PC-3 (cell line): ENCODE measurements at regions of chr7 and their contacts with region 1.

Region 1: GRCh38 chr7:43700059-43700501 is 29.2 kb downstream of the COA1 start:
- DNase-seq: peak; percentile 80
- ATAC-seq: peak; percentile 56
- H3K4me3 ChIP-seq: no peak overlapping the region
- H3K27ac ChIP-seq: no peak overlapping the region
- H3K4me1 ChIP-seq: peaks cover 29% of the 10 kb centered on the region
- H3K27me3 ChIP-seq: no peaks in the 10 kb centered on the region
- CTCF ChIP-seq: peak; percentile 85

Region 2: GRCh38 chr7:43454936-43455518 is 245.1 kb before region 1 on chr7:
- CTCF ChIA-PET with region 1: interaction called, 4 read pairs
- POLR2A ChIA-PET with region 1: no interaction called
- intact Hi-C with region 1: loop called (anchors 5 kb)
- DNase-seq: peak; percentile 66
- ATAC-seq: peak; percentile 67
- H3K4me3 ChIP-seq: peak overlapping the region; percentile 26; the same call in 1 of the 2 replicates
- H3K27ac ChIP-seq: no peak overlapping the region
- H3K4me1 ChIP-seq: no peaks in the 10 kb centered on the region
- H3K27me3 ChIP-seq: no peaks in the 10 kb centered on the region
- CTCF ChIP-seq: peak; percentile 81

Region 3: DNA sequence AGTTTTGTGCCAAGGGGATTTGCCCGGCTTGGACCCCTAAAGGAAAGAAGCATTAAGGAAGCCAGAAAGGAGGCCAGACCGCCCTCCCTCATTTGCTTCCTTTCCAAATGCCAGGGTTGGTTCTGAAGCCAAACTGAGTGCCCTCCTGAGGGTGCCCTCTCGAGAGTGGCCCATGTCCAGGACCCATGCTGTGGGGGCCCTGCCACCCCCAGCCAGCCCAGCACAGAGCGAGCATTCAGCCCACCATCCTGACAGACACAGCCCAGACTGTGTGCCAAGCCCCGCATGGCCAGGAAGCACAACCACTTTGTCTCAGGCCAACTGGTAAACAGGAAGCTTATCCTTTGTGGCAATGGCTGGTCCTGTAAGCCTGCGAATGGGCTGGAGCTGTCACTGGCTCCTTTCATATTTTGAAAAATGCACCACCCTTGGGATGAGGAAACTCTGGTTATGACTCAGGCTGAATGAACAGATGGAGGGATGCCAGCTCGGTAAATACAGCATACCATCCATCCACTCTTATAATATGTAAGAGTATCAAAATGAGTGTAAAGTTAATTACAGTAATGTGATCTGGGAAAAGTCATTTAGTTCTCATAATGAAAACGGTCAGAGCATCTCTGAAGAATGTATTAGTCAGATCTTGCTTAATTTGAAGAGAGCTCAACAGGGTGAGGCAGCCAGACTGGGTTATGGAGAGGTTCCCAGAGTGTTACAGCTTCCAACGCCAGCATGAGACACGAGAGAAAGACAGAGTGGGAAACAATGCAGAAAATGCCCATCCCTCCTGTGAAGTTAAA is 52.2 kb before region 1 on chr7:
- CTCF ChIA-PET with region 1: interaction called, 17 read pairs
- POLR2A ChIA-PET with region 1: interaction called, 4 read pairs
- intact Hi-C with region 1: loop called (anchors 2 kb)
- DNase-seq: peak; percentile 98
- ATAC-seq: peak; percentile 64
- H3K4me3 ChIP-seq: peak overlapping the region; percentile 33; the same call in 1 of the 2 replicates
- H3K27ac ChIP-seq: peak overlapping the region; percentile 99
- H3K4me1 ChIP-seq: peaks cover 73% of the 10 kb centered on the region
- H3K27me3 ChIP-seq: no peaks in the 10 kb centered on the region
- CTCF ChIP-seq: no peak

Region 4: DNA sequence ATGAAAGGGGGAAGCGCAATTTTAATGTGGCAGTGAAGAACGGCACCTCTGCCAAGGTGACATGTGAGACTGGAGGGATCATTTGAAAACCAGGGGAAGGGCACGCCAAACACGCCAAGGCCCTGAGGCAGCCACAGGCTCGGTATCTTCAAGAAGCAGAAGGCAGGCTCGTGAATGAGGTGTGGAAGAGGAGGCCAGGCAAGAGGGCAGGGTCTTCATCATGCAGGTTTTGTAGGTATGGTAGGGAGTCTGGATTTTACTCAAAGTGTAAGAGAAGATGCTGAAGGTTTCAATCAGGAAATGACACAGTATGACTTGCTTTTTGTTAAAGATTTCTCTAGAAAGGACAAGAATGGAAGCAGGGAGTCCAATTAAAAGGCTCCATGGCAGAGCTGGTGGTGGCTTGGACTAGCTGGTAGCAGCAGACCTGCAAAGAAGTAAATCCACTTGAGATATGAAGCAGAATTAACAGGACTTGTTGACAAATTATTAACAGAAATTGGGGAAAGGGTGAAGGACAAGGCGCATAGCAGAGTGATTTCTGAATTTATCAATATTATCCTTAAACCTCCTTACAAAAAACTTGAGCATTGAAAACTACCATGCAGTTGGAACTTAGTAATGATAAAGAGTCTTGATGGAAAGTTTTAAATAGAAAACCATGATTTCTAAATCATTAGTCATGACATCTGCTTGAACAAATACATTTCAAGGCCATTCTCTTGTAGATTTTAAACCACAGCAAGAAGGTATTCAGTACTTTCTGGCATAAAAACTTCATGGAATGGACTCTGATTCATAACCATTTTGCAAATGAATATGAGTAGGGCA is 41.1 kb before region 1 on chr7:
- CTCF ChIA-PET with region 1: no interaction called
- POLR2A ChIA-PET with region 1: no interaction called
- intact Hi-C with region 1: loop called (anchors 2 kb)
- DNase-seq: peak; percentile 86
- ATAC-seq: peak; percentile 82
- H3K4me3 ChIP-seq: peak overlapping the region; percentile 34
- H3K27ac ChIP-seq: peak overlapping the region; percentile 96
- H3K4me1 ChIP-seq: peaks cover 37% of the 10 kb centered on the region
- H3K27me3 ChIP-seq: no peaks in the 10 kb centered on the region
- CTCF ChIP-seq: no peak

Region 5: GRCh38 chr7:43721193-43721806 is 21.2 kb after region 1 on chr7:
- CTCF ChIA-PET with region 1: interaction called, 5 read pairs
- POLR2A ChIA-PET with region 1: no interaction called
- intact Hi-C with region 1: loop called (anchors 2 kb)
- DNase-seq: peak; percentile 69
- ATAC-seq: 0 out of 2 replicates have a peak, but pooled peaks have one; percentile 29
- H3K4me3 ChIP-seq: no peak overlapping the region
- H3K27ac ChIP-seq: no peak overlapping the region
- H3K4me1 ChIP-seq: peaks cover 7% of the 10 kb centered on the region
- H3K27me3 ChIP-seq: no peaks in the 10 kb centered on the region
- CTCF ChIP-seq: peak; percentile 80

Region 6: DNA sequence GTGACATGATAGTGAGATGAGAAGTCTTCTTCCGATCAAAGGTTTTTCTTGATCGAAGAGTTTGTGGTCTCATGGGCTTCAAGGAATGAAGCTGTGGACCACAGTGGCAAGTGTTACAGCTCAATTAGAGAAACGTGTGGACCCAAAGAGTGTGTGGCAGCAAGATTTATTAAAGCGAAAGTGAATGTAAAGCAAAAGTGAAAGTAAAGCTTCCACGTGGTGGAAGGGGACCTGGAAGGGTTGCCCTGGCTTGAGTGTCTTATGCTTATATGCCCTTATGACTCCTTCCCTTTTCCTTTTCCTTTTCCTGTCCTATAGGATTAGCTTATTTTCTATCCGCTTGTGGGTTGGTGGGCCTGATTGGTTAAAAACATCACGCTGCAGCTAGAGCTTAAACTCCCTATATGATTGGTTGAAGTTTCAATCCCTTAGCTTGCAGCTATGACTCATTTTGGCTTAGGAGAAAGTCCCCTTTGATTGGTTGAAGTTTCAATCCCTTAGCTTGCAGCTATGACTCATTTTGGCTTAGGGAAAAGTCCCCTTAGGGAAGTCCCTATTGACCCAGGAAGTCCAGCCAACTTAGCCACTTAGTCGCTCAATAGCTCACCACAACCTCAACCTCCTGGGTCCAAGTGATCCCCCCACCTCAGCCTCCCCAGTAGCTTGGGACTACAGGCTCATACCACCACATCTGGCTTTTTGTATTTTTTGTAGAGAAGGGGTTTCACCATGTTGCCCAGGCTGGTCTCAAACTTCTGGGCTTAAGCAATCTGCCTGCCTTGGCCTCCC is 134.6 kb after region 1 on chr7:
- CTCF ChIA-PET with region 1: interaction called, 3 read pairs
- POLR2A ChIA-PET with region 1: no interaction called
- intact Hi-C with region 1: loop called (anchors 2 kb)
- DNase-seq: peak; percentile 46
- ATAC-seq: no peak
- H3K4me3 ChIP-seq: no peak overlapping the region
- H3K27ac ChIP-seq: no peak overlapping the region
- H3K4me1 ChIP-seq: 0 out of 2 replicates have a peak, but pooled peaks cover 3% of the 10 kb centered on the region
- H3K27me3 ChIP-seq: no peaks in the 10 kb centered on the region
- CTCF ChIP-seq: no peak